Activated naive CD4-positive, alpha-beta T cell treated with anti-CD3 and anti-CD28 coated beads, Interleukin-2, amount 10 ng/mL, durations not matched to agents 7 days and 5 days (primary cell): ENCODE measurements at regions of chr6 and their contacts with region 1.

Region 1: GRCh38 chr6:149925974-149926777 is 3.3 kb upstream of the RAET1G start:
- DNase-seq: peak; percentile 88
- H3K4me3 Mint-ChIP-seq: peak overlapping the region; percentile 32
- H3K27ac Mint-ChIP-seq: no peak overlapping the region
- H3K4me1 Mint-ChIP-seq: peaks cover 33% of the 10 kb centered on the region
- H3K27me3 Mint-ChIP-seq: peaks cover 96% of the 10 kb centered on the region

Region 2: GRCh38 chr6:149823013-149823412 is 103.2 kb before region 1 on chr6:
- CTCF ChIA-PET with region 1: no interaction called
- DNase-seq: no peak
- H3K4me3 Mint-ChIP-seq: no peak overlapping the region
- H3K27ac Mint-ChIP-seq: no peak overlapping the region
- H3K4me1 Mint-ChIP-seq: no peaks in the 10 kb centered on the region
- H3K27me3 Mint-ChIP-seq: peaks cover 11% of the 10 kb centered on the region

Region 3: GRCh38 chr6:149834513-149835481 is 91.4 kb before region 1 on chr6:
- CTCF ChIA-PET with region 1: interaction called, 20 read pairs
- DNase-seq: peak; percentile 81
- H3K4me3 Mint-ChIP-seq: no peak overlapping the region
- H3K27ac Mint-ChIP-seq: no peak overlapping the region
- H3K4me1 Mint-ChIP-seq: peaks cover 2% of the 10 kb centered on the region
- H3K27me3 Mint-ChIP-seq: peaks cover 4% of the 10 kb centered on the region

Region 4: GRCh38 chr6:149905911-149906371 is 20.2 kb before region 1 on chr6:
- CTCF ChIA-PET with region 1: no interaction called
- DNase-seq: no peak
- H3K4me3 Mint-ChIP-seq: no peak overlapping the region
- H3K27ac Mint-ChIP-seq: no peak overlapping the region
- H3K4me1 Mint-ChIP-seq: no peaks in the 10 kb centered on the region
- H3K27me3 Mint-ChIP-seq: peaks cover 48% of the 10 kb centered on the region

Region 5: GRCh38 chr6:149965194-149966020 is 39.2 kb after region 1 on chr6:
- CTCF ChIA-PET with region 1: no interaction called
- DNase-seq: peak; percentile 41
- H3K4me3 Mint-ChIP-seq: peak overlapping the region; percentile 72
- H3K27ac Mint-ChIP-seq: no peak overlapping the region
- H3K4me1 Mint-ChIP-seq: peaks cover 30% of the 10 kb centered on the region
- H3K27me3 Mint-ChIP-seq: peaks cover 99% of the 10 kb centered on the region